ENCODE measurements at regions of chr3 and their contacts with region 1.

Region 1: GRCh38 chr3:177144923-177145780 is 52.1 kb downstream of the TBL1XR1 start:
- DNase-seq: peak in 2 of 9 experiments; percentile 66 to 85
- ATAC-seq: peak; percentile 79
- H3K4me3 ChIP-seq: peak overlapping the region in 1 of 2 experiments; percentile 43
- H3K4me3 Mint-ChIP-seq: peak overlapping the region; percentile 29
- H3K27ac ChIP-seq: peak overlapping the region; percentile 8 to 63
- H3K27ac Mint-ChIP-seq: peak overlapping the region; percentile 84
- H3K4me1 ChIP-seq: peaks cover 60% of the 10 kb centered on the region
- H3K4me1 Mint-ChIP-seq: peaks cover 75% of the 10 kb centered on the region
- H3K27me3 ChIP-seq: no peaks in the 10 kb centered on the region
- H3K27me3 Mint-ChIP-seq: no peaks in the 10 kb centered on the region
- CTCF ChIP-seq: no peak

Region 2: GRCh38 chr3:177057768-177058167 is 87.4 kb before region 1 on chr3:
- CTCF ChIA-PET with region 1: no interaction called
- POLR2A ChIA-PET with region 1: no interaction called
- intact Hi-C with region 1: loop called in 1 of 2 experiments (anchors 5 kb)
- DNase-seq: peak in 6 of 9 experiments; percentile 21 to 57 (median 36)
- ATAC-seq: peak; percentile 93
- H3K4me3 ChIP-seq: peak overlapping the region in 1 of 2 experiments; percentile 6
- H3K4me3 Mint-ChIP-seq: no peak overlapping the region
- H3K27ac ChIP-seq: peak overlapping the region in 1 of 2 experiments; percentile 2
- H3K27ac Mint-ChIP-seq: no peak overlapping the region
- H3K4me1 ChIP-seq: peaks cover 15% of the 10 kb centered on the region
- H3K4me1 Mint-ChIP-seq: peaks cover 45% of the 10 kb centered on the region
- H3K27me3 ChIP-seq: no peaks in the 10 kb centered on the region
- H3K27me3 Mint-ChIP-seq: no peaks in the 10 kb centered on the region
- CTCF ChIP-seq: no peak

Region 3: DNA sequence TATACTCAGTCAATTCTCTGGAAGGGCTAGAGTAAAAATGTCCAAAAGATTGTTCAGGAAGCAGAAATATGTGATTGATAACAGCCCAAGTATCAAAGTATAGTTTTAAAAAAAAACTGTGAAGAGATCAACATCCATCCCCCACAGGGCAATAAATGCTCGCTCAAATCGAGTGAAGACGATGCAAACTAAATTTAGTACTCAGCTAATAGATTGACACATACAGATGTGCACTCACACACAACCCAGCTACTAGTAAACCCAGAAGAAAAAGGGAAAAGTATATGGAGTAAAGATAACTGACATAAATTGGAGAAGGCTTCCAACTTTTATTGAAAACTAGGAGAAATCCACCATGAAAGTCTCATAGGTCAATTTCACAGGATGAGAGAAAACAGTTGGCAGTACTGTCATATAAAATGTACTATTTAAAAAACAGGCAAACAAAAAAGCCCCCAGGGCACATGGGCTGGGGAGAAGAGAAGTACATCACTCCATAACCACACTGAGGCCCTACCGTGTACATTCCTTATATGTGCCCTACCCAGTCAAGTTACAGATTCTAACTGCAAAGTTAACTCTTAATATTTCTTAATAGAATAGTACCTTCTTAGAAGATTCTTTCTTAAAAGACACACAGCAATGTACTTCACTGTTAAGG is 73.5 kb before region 1 on chr3:
- CTCF ChIA-PET with region 1: no interaction called
- POLR2A ChIA-PET with region 1: no interaction called
- intact Hi-C with region 1: no loop called
- DNase-seq: no peak
- ATAC-seq: no peak
- H3K4me3 ChIP-seq: no peak overlapping the region
- H3K4me3 Mint-ChIP-seq: no peak overlapping the region
- H3K27ac ChIP-seq: no peak overlapping the region
- H3K27ac Mint-ChIP-seq: no peak overlapping the region
- H3K4me1 ChIP-seq: peaks cover 19% of the 10 kb centered on the region
- H3K4me1 Mint-ChIP-seq: peaks cover 76% of the 10 kb centered on the region
- H3K27me3 ChIP-seq: no peaks in the 10 kb centered on the region
- H3K27me3 Mint-ChIP-seq: no peaks in the 10 kb centered on the region
- CTCF ChIP-seq: no peak

Region 4: GRCh38 chr3:177157492-177157891 is 12.3 kb after region 1 on chr3:
- CTCF ChIA-PET with region 1: interaction called, 7 read pairs
- POLR2A ChIA-PET with region 1: interaction called, 3 read pairs
- intact Hi-C with region 1: loop called in 1 of 2 experiments (anchors 2 kb)
- DNase-seq: no peak
- ATAC-seq: no peak
- H3K4me3 ChIP-seq: no peak overlapping the region
- H3K4me3 Mint-ChIP-seq: no peak overlapping the region
- H3K27ac ChIP-seq: no peak overlapping the region
- H3K27ac Mint-ChIP-seq: no peak overlapping the region
- H3K4me1 ChIP-seq: peaks cover 7% of the 10 kb centered on the region
- H3K4me1 Mint-ChIP-seq: peaks cover 63% of the 10 kb centered on the region
- H3K27me3 ChIP-seq: no peaks in the 10 kb centered on the region
- H3K27me3 Mint-ChIP-seq: no peaks in the 10 kb centered on the region
- CTCF ChIP-seq: no peak

Region 5: GRCh38 chr3:177190756-177191681 is 45.9 kb after region 1 on chr3:
- CTCF ChIA-PET with region 1: no interaction called
- POLR2A ChIA-PET with region 1: no interaction called
- intact Hi-C with region 1: loop called (anchors 2 to 5 kb)
- DNase-seq: no peak
- ATAC-seq: no peak
- H3K4me3 ChIP-seq: no peak overlapping the region
- H3K4me3 Mint-ChIP-seq: peak overlapping the region; percentile 26
- H3K27ac ChIP-seq: no peak overlapping the region
- H3K27ac Mint-ChIP-seq: peak overlapping the region; percentile 70
- H3K4me1 ChIP-seq: peaks cover 50% of the 10 kb centered on the region
- H3K4me1 Mint-ChIP-seq: peaks cover 68% of the 10 kb centered on the region
- H3K27me3 ChIP-seq: no peaks in the 10 kb centered on the region
- H3K27me3 Mint-ChIP-seq: no peaks in the 10 kb centered on the region
- CTCF ChIP-seq: no peak